Prostate gland (tissue), 2 donors: ENCODE measurements at regions of chr4 and their contacts with region 1.

Region 1: DNA sequence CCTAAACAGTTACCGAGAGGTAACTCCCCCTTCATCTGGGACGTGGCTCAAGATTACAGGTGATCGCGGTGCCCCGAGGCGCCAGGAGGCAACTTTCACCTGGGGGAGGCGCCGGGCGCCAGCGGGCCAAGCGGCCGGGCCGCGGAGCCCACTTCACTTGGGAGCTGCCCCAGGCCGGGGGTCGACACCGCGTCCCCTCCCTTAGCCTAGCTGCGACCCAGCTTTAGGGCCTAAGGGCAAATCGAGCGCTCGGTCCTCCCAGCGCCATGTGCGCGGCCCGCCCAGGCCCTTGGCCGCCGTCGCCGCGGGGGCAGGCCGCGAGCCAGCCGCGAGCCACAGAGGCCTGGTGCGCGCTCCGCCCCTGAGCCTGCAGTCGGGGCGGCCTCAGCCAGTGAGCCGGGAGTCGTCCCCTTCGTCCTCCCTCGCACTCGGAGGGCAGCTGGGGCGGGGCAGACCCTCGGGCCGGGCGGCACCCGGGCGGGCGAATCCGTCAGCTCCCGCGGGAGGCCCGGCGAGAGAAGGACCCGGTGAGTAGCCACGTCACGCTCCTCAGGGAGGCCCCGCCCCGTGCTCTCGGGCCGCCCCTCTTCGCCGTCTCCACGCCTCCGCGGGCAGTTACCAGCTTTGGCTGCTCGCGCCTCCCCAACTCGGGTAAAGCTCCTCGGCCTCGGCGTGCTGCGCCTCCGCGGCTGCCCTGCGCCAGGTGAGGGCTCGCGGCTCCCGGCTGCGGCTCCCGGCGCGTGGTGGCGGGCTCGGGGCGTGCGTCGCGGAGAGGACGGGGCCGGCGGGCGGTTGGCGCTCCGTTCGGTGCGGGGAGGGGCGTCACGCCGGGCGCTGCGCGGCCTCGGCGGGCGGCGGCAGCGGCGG is at the start of gene LARP1B:
- DNase-seq: peak; percentile 95
- H3K4me3 ChIP-seq: peak within 1 kb of the TSS; percentile 65 to 87
- H3K27ac ChIP-seq: peak within 1 kb of the TSS; percentile 95
- H3K4me1 ChIP-seq: no peaks in the 10 kb centered on the region
- H3K27me3 ChIP-seq: no peaks in the 10 kb centered on the region
- CTCF ChIP-seq: no peak
- POLR2A ChIP-seq: peak; percentile 95
- total RNA-seq, gene LARP1B: 20.2 to 20.9 TPM

Region 2: DNA sequence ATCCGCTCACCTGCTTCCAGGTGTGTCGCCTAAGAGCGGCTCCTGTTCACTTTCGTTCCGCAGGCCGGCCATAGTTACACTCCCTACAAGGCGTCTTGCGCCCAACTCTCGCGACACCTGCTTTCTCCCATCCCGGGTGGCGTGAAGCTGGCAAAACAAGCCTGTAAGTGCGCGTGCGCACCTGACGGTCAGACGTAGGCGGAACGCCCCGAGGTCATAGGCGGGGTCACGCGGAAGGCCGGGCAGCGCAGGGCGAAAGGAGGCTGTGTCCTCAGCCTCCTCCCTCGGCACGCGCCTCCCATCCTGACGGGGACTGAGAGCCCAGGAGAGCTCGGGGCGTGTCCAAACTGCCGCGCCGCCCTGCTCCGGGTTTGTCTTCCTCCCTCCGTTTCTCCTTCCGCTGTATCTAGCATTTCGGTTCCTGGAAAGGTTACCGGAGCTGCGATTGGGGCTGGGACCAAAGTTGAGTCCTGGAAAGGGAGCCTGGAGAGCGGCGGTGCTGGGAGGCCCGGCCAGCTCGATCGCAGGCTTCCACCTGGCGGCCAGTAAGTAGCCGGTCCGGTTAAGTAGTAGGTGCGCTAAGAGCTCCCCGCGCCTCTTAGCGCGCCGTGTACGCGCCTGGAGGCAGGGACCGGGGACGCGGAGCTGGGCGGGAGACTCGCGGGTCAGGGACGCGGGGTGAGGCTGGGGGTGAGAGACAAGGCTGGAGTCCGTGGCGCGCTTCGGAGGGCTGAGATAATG is 95.7 kb before region 1 on chr4 and contains the starts of genes ABHD18 and MFSD8:
- intact Hi-C with region 1: loop called (anchors 2 kb)
- DNase-seq: peak; percentile 99
- H3K4me3 ChIP-seq: peak within 1 kb of the TSS; percentile 72 to 82
- H3K27ac ChIP-seq: peak within 1 kb of the TSS; percentile 90 to 91
- H3K4me1 ChIP-seq: no peaks in the 10 kb centered on the region
- H3K27me3 ChIP-seq: no peaks in the 10 kb centered on the region
- CTCF ChIP-seq: peak; percentile 34 to 62 (median 50)
- POLR2A ChIP-seq: peak; percentile 87
- total RNA-seq, gene ABHD18: 5.7 to 10.6 TPM
- total RNA-seq, gene MFSD8: 12.6 to 21.0 TPM

Region 3: GRCh38 chr4:128241425-128241913 is 180.5 kb after region 1 on chr4:
- intact Hi-C with region 1: no loop called
- DNase-seq: no peak
- H3K4me3 ChIP-seq: no peak overlapping the region
- H3K27ac ChIP-seq: no peak overlapping the region
- H3K4me1 ChIP-seq: no peaks in the 10 kb centered on the region
- H3K27me3 ChIP-seq: no peaks in the 10 kb centered on the region
- CTCF ChIP-seq: no peak
- POLR2A ChIP-seq: no peak

Region 4: GRCh38 chr4:128287871-128288688 is 227.1 kb after region 1 on chr4:
- intact Hi-C with region 1: loop called (anchors 5 kb)
- DNase-seq: peak; percentile 99
- H3K4me3 ChIP-seq: peak overlapping the region; percentile 84 to 89
- H3K27ac ChIP-seq: peak overlapping the region; percentile 90 to 94
- H3K4me1 ChIP-seq: no peaks in the 10 kb centered on the region
- H3K27me3 ChIP-seq: no peaks in the 10 kb centered on the region
- CTCF ChIP-seq: peak in 3 of 4 experiments; percentile 28 to 67 (median 59)
- POLR2A ChIP-seq: peak; percentile 85